ENCODE measurements at regions of chr5 and their contacts with region 1.

Region 1: DNA sequence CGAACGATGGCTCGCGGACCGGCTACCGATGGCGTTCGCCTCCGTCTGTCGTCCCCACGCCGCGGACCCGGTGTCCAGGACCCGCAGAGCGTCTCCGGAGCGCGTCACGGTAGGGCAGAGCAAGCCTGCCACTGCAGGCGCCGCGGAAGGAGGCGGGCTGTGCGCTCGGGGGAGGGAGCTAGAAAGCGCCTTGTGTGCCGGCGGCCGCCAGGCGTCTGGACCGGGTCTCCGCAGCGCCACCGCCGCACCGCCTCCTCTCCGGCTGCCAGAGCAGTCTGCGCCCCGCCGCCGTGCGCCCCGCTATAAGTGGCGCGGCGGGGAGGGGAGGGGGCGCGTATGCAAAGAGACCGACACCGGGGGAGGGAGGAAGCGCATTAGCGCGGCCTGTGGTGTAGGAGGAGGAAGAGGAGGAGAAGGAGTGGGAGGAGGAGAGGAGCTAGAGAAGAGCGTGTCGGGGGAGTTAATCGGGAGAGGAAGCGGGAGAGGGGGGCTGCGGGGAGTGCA is at the start of gene ENC1:
- H3K4me3 ChIP-seq: peak within 1 kb of the TSS; percentile 92
- H3K27ac ChIP-seq: peak within 1 kb of the TSS; percentile 98
- H3K4me1 ChIP-seq: peaks cover 17% of the 10 kb centered on the region
- CTCF ChIP-seq: peak; percentile 99

Region 2: DNA sequence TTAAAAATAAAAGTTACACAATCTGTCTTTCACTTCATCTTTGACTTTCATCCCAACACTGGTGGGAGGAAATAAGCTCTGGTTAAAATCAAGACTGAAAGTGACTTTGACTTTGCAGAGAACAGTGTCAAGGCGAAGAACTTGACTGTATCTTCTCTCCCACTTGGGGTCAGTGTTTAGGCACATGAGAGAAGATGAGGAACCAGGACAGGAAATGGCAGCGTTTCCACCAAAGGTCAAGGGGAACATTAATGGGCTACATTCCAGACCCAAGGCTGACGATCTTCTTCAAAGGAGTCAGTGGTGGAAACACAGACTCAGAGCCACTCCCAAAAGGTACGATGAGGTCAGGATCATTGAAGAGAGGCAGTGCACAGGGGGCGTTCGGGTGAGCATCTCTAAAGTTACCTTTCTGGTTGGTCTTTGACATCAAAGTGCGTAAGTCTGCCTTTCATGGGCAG is 605.0 kb before region 1 on chr5:
- CTCF ChIA-PET with region 1: interaction called, 14 read pairs
- POLR2A ChIA-PET with region 1: interaction called, 7 read pairs
- H3K4me3 ChIP-seq: no peak overlapping the region
- H3K27ac ChIP-seq: no peak overlapping the region; the same call in 1 of the 2 replicates
- H3K4me1 ChIP-seq: peaks cover 11% of the 10 kb centered on the region
- CTCF ChIP-seq: peak; percentile 73

Region 3: GRCh38 chr5:74356009-74356695 is 284.4 kb before region 1 on chr5:
- CTCF ChIA-PET with region 1: no interaction called
- POLR2A ChIA-PET with region 1: interaction called, 11 read pairs
- H3K4me3 ChIP-seq: no peak overlapping the region
- H3K27ac ChIP-seq: no peak overlapping the region
- H3K4me1 ChIP-seq: peaks cover 22% of the 10 kb centered on the region
- CTCF ChIP-seq: no peak

Region 4: GRCh38 chr5:74402553-74402952 is 237.9 kb before region 1 on chr5:
- CTCF ChIA-PET with region 1: interaction called, 4 read pairs
- POLR2A ChIA-PET with region 1: interaction called, 10 read pairs
- H3K4me3 ChIP-seq: no peak overlapping the region
- H3K27ac ChIP-seq: no peak overlapping the region
- H3K4me1 ChIP-seq: 0 out of 2 replicates have a peak, but pooled peaks cover 3% of the 10 kb centered on the region
- CTCF ChIP-seq: no peak

Region 5: GRCh38 chr5:74543156-74543995 is 97.1 kb before region 1 on chr5:
- CTCF ChIA-PET with region 1: interaction called, 3 read pairs
- POLR2A ChIA-PET with region 1: interaction called, 27 read pairs
- H3K4me3 ChIP-seq: peak overlapping the region; percentile 9
- H3K27ac ChIP-seq: peak overlapping the region; percentile 85
- H3K4me1 ChIP-seq: peaks cover 27% of the 10 kb centered on the region
- CTCF ChIP-seq: no peak